Naive thymus-derived CD4-positive, alpha-beta T cell (primary cell): ENCODE measurements at regions of chr11 and their contacts with region 1.

Region 1: DNA sequence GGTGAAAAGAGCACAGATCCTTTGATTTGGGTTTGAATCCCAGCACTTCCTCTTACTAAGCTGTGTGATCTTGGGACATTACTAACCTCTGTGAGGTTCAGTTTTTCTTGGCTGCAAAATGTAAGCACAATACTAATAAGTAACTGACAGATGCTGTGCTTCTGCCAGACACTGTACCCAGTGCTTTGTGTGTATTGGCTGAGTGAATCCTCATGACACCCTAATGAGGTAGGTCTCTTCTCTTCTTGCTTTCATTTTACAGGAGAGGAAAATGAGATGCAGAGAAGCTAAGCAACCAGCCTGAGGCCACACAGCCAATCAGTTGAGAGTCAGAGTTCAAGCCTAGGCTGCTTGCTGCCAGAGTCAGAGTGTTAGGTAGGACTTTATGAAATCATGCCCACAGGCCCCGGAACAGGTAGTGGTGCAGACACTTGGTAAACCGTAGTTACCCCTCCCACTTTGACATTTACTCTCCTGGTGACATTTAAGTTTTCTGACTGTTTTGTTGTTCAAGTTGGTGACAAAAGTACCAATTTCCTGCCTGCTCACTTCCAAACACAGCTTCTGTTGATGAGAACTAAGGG is 21.2 kb downstream of the PTPRJ start:
- DNase-seq: peak; percentile 36 to 96 (median 94)
- ATAC-seq: peak; percentile 97
- H3K4me3 ChIP-seq: peak overlapping the region; percentile 23
- H3K4me3 Mint-ChIP-seq: peak overlapping the region; percentile 63 to 91 (median 78)
- H3K27ac ChIP-seq: peak overlapping the region; percentile 71
- H3K27ac Mint-ChIP-seq: peak overlapping the region; percentile 94 to 98 (median 97)
- H3K4me1 ChIP-seq: peaks cover 77 to 81% of the 10 kb centered on the region in 2 donors
- H3K4me1 Mint-ChIP-seq: peaks cover 55 to 95% (median 86%) of the 10 kb centered on the region in 7 donors
- H3K27me3 ChIP-seq: no peaks in the 10 kb centered on the region
- H3K27me3 Mint-ChIP-seq: no peaks in the 10 kb centered on the region

Region 2: DNA sequence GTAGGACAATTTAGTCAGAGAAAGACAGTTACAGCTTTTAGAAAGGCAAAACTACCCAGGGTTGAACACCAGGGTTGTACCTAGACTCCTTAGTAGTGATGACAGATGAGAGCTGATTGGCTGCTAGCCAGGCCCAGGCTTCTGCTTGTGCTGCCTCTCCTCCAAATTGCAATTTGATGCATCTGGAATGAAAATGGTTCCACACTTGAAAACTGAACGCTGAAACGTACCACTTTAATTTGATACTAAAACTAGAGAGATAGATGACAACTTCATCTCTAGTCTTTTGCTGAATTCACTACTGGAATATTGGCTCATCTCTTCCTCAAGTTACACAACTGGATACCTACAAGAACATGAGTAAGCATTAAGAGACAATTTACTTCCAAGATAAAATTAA is 215.2 kb before region 1 on chr11:
- CTCF ChIA-PET with region 1: no interaction called
- POLR2A ChIA-PET with region 1: no interaction called
- intact Hi-C with region 1: no loop called
- DNase-seq: no peak
- ATAC-seq: no peak
- H3K4me3 ChIP-seq: no peak overlapping the region
- H3K4me3 Mint-ChIP-seq: no peak overlapping the region
- H3K27ac ChIP-seq: no peak overlapping the region
- H3K27ac Mint-ChIP-seq: no peak overlapping the region
- H3K4me1 ChIP-seq: no peaks in the 10 kb centered on the region
- H3K4me1 Mint-ChIP-seq: no peaks in the 10 kb centered on the region
- H3K27me3 ChIP-seq: no peaks in the 10 kb centered on the region
- H3K27me3 Mint-ChIP-seq: no peaks in the 10 kb centered on the region

Region 3: DNA sequence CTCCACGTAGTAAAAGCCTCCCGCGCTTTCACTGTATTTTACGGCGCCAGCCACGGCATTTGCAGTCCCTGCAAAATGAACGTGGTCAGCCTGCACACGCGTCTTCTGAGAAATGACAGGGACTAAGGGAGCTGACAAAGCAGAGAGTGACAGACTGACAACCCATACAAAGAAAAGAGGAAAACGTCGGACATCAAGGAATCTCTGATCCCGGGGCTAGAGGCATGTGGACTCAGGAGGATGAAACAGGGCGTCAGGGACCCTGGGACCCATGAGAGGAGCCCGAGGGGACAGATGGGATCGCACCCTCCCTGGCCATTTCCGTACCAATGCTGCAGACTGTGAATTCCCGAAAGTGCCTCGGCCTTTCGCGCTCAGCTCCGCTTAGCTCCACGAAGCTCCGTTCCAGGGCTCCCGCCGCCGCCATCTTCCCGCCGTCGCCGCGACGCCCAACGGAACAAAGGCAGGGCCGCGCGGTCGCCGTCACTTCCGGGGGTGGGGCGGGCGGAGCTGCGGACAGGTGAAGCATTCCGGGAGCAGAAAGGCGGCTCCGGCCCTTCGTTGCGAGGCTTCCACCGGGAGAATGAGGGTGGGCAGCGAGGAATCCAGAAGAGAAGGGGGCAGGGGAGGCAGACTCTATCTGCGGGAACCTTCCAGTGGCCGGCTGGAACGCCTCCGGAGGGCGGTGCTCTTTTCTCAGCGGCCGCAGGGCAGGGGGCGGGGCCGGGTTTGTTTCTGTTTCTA is 153.5 kb before region 1 on chr11 and contains the start of gene NUP160:
- CTCF ChIA-PET with region 1: no interaction called
- POLR2A ChIA-PET with region 1: no interaction called
- intact Hi-C with region 1: loop called in 1 of 2 experiments (anchors 1 kb)
- DNase-seq: peak; percentile 78 to 92 (median 85)
- ATAC-seq: peak; percentile 92
- H3K4me3 ChIP-seq: peak within 1 kb of the TSS; percentile 88
- H3K4me3 Mint-ChIP-seq: peak within 1 kb of the TSS; percentile 88 to 100 (median 98)
- H3K27ac ChIP-seq: peak within 1 kb of the TSS; percentile 97
- H3K27ac Mint-ChIP-seq: peak within 1 kb of the TSS; percentile 72 to 100 (median 98)
- H3K4me1 ChIP-seq: peaks cover 12 to 66% of the 10 kb centered on the region in 2 donors
- H3K4me1 Mint-ChIP-seq: peaks cover 38 to 71% (median 62%) of the 10 kb centered on the region in 7 donors
- H3K27me3 ChIP-seq: no peaks in the 10 kb centered on the region
- H3K27me3 Mint-ChIP-seq: peaks cover 0 to 2% (median 0%) of the 10 kb centered on the region in 5 donors
- total RNA-seq, gene NUP160: 53.9 to 68.0 (median 65.5) TPM

Region 4: DNA sequence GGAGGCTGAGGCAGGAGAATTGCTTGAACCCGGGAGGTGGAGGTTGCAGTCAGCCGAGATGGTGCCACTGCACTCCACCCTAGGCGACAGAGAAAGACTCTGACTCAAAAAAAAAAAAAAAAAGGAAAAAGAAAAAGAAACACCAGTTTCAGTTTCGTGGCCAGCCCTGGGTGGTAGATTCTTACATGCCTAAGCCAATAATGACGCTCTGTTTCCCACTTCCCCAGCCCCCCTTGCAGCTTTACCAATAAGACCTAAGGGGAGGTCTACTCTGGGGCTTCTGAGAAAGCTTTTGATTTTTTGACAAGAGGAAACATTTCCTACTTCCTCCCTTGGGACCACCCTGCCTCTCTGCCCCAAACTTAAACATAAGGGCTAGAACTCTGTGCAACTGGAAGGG is 51.1 kb before region 1 on chr11:
- CTCF ChIA-PET with region 1: interaction called, 3 read pairs
- POLR2A ChIA-PET with region 1: interaction called, 4 read pairs
- intact Hi-C with region 1: loop called in 1 of 2 experiments (anchors 5 kb)
- DNase-seq: peak; percentile 14 to 82 (median 78)
- ATAC-seq: peak; percentile 92
- H3K4me3 ChIP-seq: no peak overlapping the region
- H3K4me3 Mint-ChIP-seq: peak overlapping the region; percentile 51 to 80 (median 70)
- H3K27ac ChIP-seq: peak overlapping the region; percentile 73
- H3K27ac Mint-ChIP-seq: peak overlapping the region; percentile 83 to 98 (median 96)
- H3K4me1 ChIP-seq: peaks cover 4 to 26% of the 10 kb centered on the region in 2 donors
- H3K4me1 Mint-ChIP-seq: peaks cover 25 to 60% (median 48%) of the 10 kb centered on the region in 7 donors
- H3K27me3 ChIP-seq: no peaks in the 10 kb centered on the region
- H3K27me3 Mint-ChIP-seq: no peaks in the 10 kb centered on the region

Region 5: GRCh38 chr11:47991266-47991830 is 10.2 kb before region 1 on chr11:
- CTCF ChIA-PET with region 1: no interaction called
- POLR2A ChIA-PET with region 1: interaction called, 9 read pairs
- intact Hi-C with region 1: loop called in 1 of 2 experiments (anchors 1 kb)
- DNase-seq: no peak
- ATAC-seq: no peak
- H3K4me3 ChIP-seq: peak overlapping the region; percentile 28
- H3K4me3 Mint-ChIP-seq: peak overlapping the region; percentile 24 to 83 (median 72)
- H3K27ac ChIP-seq: peak overlapping the region; percentile 56
- H3K27ac Mint-ChIP-seq: peak overlapping the region; percentile 29 to 93 (median 79)
- H3K4me1 ChIP-seq: peaks cover 6 to 12% of the 10 kb centered on the region in 2 donors
- H3K4me1 Mint-ChIP-seq: peaks cover 11 to 73% (median 62%) of the 10 kb centered on the region in 7 donors
- H3K27me3 ChIP-seq: no peaks in the 10 kb centered on the region
- H3K27me3 Mint-ChIP-seq: no peaks in the 10 kb centered on the region

Region 6: GRCh38 chr11:48020092-48020755 is 18.7 kb after region 1 on chr11:
- CTCF ChIA-PET with region 1: interaction called, 5 read pairs
- POLR2A ChIA-PET with region 1: interaction called, 24 read pairs
- intact Hi-C with region 1: loop called (anchors 1 kb)
- DNase-seq: no peak
- ATAC-seq: peak; percentile 80
- H3K4me3 ChIP-seq: no peak overlapping the region
- H3K4me3 Mint-ChIP-seq: peak overlapping the region in 6 of 10 donors; percentile 2 to 43 (median 7)
- H3K27ac ChIP-seq: no peak overlapping the region
- H3K27ac Mint-ChIP-seq: peak overlapping the region; percentile 2 to 78 (median 67)
- H3K4me1 ChIP-seq: peaks cover 43 to 56% of the 10 kb centered on the region in 2 donors
- H3K4me1 Mint-ChIP-seq: peaks cover 45 to 83% (median 70%) of the 10 kb centered on the region in 7 donors
- H3K27me3 ChIP-seq: no peaks in the 10 kb centered on the region
- H3K27me3 Mint-ChIP-seq: no peaks in the 10 kb centered on the region

Region 7: GRCh38 chr11:48043111-48043990 is 41.8 kb after region 1 on chr11:
- CTCF ChIA-PET with region 1: interaction called, 4 read pairs
- POLR2A ChIA-PET with region 1: interaction called, 9 read pairs
- intact Hi-C with region 1: loop called in 1 of 2 experiments (anchors 2 kb)
- DNase-seq: peak in 5 of 9 donors; percentile 34 to 51 (median 44)
- ATAC-seq: peak; percentile 70
- H3K4me3 ChIP-seq: peak overlapping the region; percentile 18
- H3K4me3 Mint-ChIP-seq: peak overlapping the region; percentile 44 to 82 (median 69)
- H3K27ac ChIP-seq: peak overlapping the region; percentile 59
- H3K27ac Mint-ChIP-seq: peak overlapping the region; percentile 67 to 91 (median 83)
- H3K4me1 ChIP-seq: peaks cover 14 to 29% of the 10 kb centered on the region in 2 donors
- H3K4me1 Mint-ChIP-seq: peaks cover 46 to 78% (median 74%) of the 10 kb centered on the region in 7 donors
- H3K27me3 ChIP-seq: no peaks in the 10 kb centered on the region
- H3K27me3 Mint-ChIP-seq: no peaks in the 10 kb centered on the region

Region 8: DNA sequence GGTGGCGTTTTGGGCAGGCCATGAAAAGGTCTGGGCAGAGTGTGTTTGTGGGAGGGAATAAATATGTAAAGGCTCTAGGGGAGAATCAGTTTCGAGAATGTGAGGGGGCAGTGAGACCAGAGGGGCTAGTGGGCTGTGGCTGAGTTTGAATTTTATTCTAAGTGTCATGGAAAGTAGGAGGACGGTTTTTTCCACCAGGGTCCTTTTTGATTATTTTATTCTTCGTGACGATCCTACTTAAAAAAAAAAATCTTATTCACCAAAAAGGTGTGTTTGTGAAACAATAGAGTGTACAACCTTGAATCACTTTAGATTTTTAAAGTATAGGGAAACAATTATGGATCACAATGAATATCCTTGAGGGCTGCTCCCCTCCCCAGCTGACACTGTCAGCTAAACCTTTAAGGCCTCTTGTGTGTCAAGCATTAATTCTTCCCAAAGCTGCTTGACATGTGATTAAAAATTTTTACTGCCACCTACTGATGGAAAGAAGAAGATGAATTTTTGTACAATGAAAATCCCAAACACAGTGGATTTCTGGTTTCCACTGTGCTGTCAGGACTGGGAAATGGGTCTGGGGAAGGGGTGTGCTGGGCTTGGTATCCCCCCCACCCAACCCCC is 107.6 kb after region 1 on chr11:
- CTCF ChIA-PET with region 1: interaction called, 7 read pairs
- POLR2A ChIA-PET with region 1: interaction called, 7 read pairs
- intact Hi-C with region 1: loop called (anchors 1 kb)
- DNase-seq: peak in 6 of 9 donors; percentile 20 to 50 (median 32)
- ATAC-seq: peak; percentile 57
- H3K4me3 ChIP-seq: peak overlapping the region; percentile 26
- H3K4me3 Mint-ChIP-seq: peak overlapping the region; percentile 38 to 86 (median 76)
- H3K27ac ChIP-seq: peak overlapping the region; percentile 30
- H3K27ac Mint-ChIP-seq: peak overlapping the region in 8 of 9 donors; percentile 14 to 90 (median 80)
- H3K4me1 ChIP-seq: peaks cover 18 to 27% of the 10 kb centered on the region in 2 donors
- H3K4me1 Mint-ChIP-seq: peaks cover 32 to 59% (median 49%) of the 10 kb centered on the region in 7 donors
- H3K27me3 ChIP-seq: no peaks in the 10 kb centered on the region
- H3K27me3 Mint-ChIP-seq: no peaks in the 10 kb centered on the region

Region 9: DNA sequence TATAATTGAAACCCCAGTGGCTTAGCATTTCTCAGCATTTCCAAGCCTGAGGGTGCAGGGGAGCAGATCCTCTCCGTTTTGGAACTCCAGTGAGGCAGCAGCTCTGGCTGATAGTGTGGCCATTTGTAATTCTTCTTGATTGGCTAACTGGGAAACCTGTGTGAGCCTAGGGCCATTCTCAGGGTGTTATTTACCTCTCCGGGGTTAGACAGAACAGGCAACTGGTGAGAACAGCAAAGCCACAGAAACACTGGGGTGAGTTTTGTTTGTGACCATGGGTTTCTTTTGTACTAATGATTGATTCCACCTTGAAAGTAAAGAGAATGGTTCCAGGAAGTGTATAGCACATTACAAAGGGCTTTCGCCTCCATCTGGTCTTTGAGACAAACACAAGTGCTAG is 241.0 kb after region 1 on chr11:
- CTCF ChIA-PET with region 1: no interaction called
- POLR2A ChIA-PET with region 1: no interaction called
- intact Hi-C with region 1: no loop called
- DNase-seq: no peak
- ATAC-seq: no peak
- H3K4me3 ChIP-seq: no peak overlapping the region
- H3K4me3 Mint-ChIP-seq: no peak overlapping the region
- H3K27ac ChIP-seq: no peak overlapping the region
- H3K27ac Mint-ChIP-seq: no peak overlapping the region
- H3K4me1 ChIP-seq: no peaks in the 10 kb centered on the region
- H3K4me1 Mint-ChIP-seq: peaks cover 0 to 4% (median 0%) of the 10 kb centered on the region in 7 donors
- H3K27me3 ChIP-seq: no peaks in the 10 kb centered on the region
- H3K27me3 Mint-ChIP-seq: peaks cover 4 to 41% (median 39%) of the 10 kb centered on the region in 5 donors